Activated CD4-positive, alpha-beta T cell treated with anti-CD3 and anti-CD28 coated beads for 36 hours (primary cell): ENCODE measurements at regions of chr7 and their contacts with region 1.

Region 1: GRCh38 chr7:33932832-33933468 is 27.6 kb downstream of the BMPER start:
- DNase-seq: peak; percentile 78
- ATAC-seq: peak; percentile 51
- H3K4me3 Mint-ChIP-seq: no peak overlapping the region
- H3K27ac Mint-ChIP-seq: no peak overlapping the region
- H3K4me1 Mint-ChIP-seq: no peaks in the 10 kb centered on the region
- H3K27me3 Mint-ChIP-seq: peaks cover 8% of the 10 kb centered on the region

Region 2: DNA sequence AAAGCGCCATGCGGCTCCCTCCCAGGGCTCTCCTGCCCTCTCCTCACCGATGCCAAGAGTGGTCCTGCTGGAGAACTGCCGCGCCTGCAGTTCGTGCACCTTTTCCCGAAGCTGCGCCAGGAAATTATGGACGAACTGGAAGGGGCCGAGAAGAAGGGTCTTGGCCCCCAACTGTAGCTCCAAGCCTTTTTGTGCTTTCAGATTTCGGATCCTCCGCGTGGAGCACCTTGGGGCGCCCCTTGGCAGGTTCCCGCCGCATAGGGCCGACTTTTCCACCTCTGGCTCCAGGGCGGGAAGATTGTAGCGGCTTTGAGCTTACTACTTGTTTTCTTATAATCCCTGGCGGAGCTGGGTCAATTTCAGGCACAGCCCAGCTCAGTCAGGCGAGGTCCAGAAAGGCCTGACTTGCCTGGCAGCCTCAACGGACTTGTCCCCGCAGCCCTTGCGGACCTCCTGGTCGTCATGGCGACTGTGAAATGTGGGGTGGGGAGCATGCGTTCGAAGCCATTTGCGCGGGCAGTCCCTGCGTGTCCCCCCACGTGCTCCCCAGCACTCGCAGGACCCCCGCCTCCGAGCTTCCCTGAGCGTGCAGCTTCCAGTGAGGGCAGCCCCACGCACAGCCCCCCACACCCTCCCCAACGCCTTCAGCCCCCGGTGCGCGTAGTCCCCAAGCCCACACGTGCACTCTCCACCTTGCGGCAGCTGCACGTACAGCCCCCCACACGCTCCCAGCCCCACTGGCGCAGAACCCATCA is 1171.3 kb before region 1 on chr7:
- CTCF ChIA-PET with region 1: interaction called, 3 read pairs
- POLR2A ChIA-PET with region 1: no interaction called
- intact Hi-C with region 1: loop called in 1 of 2 experiments (anchors 2 kb)
- DNase-seq: peak; percentile 11
- ATAC-seq: no peak
- H3K4me3 Mint-ChIP-seq: no peak overlapping the region
- H3K27ac Mint-ChIP-seq: no peak overlapping the region
- H3K4me1 Mint-ChIP-seq: peaks cover 9% of the 10 kb centered on the region
- H3K27me3 Mint-ChIP-seq: peaks cover 43% of the 10 kb centered on the region

Region 3: GRCh38 chr7:33185786-33186185 is 747.2 kb before region 1 on chr7:
- CTCF ChIA-PET with region 1: interaction called, 5 read pairs
- POLR2A ChIA-PET with region 1: no interaction called
- intact Hi-C with region 1: loop called in 1 of 2 experiments (anchors 1 kb)
- DNase-seq: peak; percentile 9
- ATAC-seq: no peak
- H3K4me3 Mint-ChIP-seq: no peak overlapping the region
- H3K27ac Mint-ChIP-seq: no peak overlapping the region
- H3K4me1 Mint-ChIP-seq: peaks cover 5% of the 10 kb centered on the region
- H3K27me3 Mint-ChIP-seq: no peaks in the 10 kb centered on the region

Region 4: GRCh38 chr7:33243319-33243881 is 689.5 kb before region 1 on chr7:
- CTCF ChIA-PET with region 1: interaction called, 7 read pairs
- POLR2A ChIA-PET with region 1: no interaction called
- intact Hi-C with region 1: loop called (anchors 5 to 10 kb)
- DNase-seq: no peak
- ATAC-seq: no peak
- H3K4me3 Mint-ChIP-seq: no peak overlapping the region
- H3K27ac Mint-ChIP-seq: no peak overlapping the region
- H3K4me1 Mint-ChIP-seq: no peaks in the 10 kb centered on the region
- H3K27me3 Mint-ChIP-seq: no peaks in the 10 kb centered on the region

Region 5: DNA sequence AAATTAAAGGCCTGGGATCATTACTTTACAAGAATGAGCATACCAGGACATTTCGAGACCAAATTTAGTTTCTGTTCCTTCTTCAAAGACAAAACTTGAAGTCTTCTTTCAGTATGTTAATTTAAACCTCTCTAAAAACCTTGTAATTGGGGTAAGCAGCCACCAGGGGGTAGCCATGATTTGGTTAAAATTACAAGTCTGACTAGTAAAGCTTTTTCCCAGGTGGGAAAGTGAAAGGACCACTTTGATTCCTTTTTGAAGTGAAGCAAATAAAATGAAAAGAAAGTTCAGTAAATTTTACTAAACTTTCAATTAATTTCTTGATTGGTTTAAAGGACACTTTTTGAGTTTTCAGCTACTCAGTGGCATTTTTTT is 509.3 kb before region 1 on chr7:
- CTCF ChIA-PET with region 1: no interaction called
- POLR2A ChIA-PET with region 1: no interaction called
- intact Hi-C with region 1: loop called in 1 of 2 experiments (anchors 10 kb)
- DNase-seq: peak; percentile 29
- ATAC-seq: no peak
- H3K4me3 Mint-ChIP-seq: no peak overlapping the region
- H3K27ac Mint-ChIP-seq: no peak overlapping the region
- H3K4me1 Mint-ChIP-seq: no peaks in the 10 kb centered on the region
- H3K27me3 Mint-ChIP-seq: no peaks in the 10 kb centered on the region

Region 6: GRCh38 chr7:33757562-33758165 is 175.3 kb before region 1 on chr7:
- CTCF ChIA-PET with region 1: interaction called, 4 read pairs
- POLR2A ChIA-PET with region 1: no interaction called
- intact Hi-C with region 1: loop called in 1 of 2 experiments (anchors 1 kb)
- DNase-seq: peak; percentile 43
- ATAC-seq: no peak
- H3K4me3 Mint-ChIP-seq: no peak overlapping the region
- H3K27ac Mint-ChIP-seq: no peak overlapping the region
- H3K4me1 Mint-ChIP-seq: no peaks in the 10 kb centered on the region
- H3K27me3 Mint-ChIP-seq: no peaks in the 10 kb centered on the region

Region 7: GRCh38 chr7:33946094-33946700 is 13.2 kb after region 1 on chr7:
- CTCF ChIA-PET with region 1: interaction called, 10 read pairs
- POLR2A ChIA-PET with region 1: interaction called, 6 read pairs
- intact Hi-C with region 1: no loop called
- DNase-seq: no peak
- ATAC-seq: no peak
- H3K4me3 Mint-ChIP-seq: no peak overlapping the region
- H3K27ac Mint-ChIP-seq: no peak overlapping the region
- H3K4me1 Mint-ChIP-seq: no peaks in the 10 kb centered on the region
- H3K27me3 Mint-ChIP-seq: peaks cover 2% of the 10 kb centered on the region

Region 8: DNA sequence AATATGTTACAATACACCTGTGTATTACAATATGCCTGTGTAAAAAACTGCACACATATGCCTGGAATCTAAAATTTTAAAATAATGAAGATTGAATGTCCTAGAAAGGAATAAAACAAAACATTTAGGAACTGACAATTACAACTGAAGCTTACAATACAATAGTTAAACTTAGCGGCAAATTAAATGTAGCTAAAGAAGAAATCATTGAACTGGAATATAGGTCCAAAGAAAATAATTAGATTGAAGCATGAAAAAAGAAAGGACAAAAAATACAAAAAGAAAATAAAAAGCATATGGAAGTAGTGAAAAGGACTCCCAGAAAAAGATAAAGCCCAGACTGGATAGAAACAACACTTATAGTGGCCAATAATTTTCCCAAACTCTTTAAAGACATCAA is 763.5 kb after region 1 on chr7:
- CTCF ChIA-PET with region 1: no interaction called
- POLR2A ChIA-PET with region 1: no interaction called
- intact Hi-C with region 1: no loop called
- DNase-seq: no peak
- ATAC-seq: no peak
- H3K4me3 Mint-ChIP-seq: no peak overlapping the region
- H3K27ac Mint-ChIP-seq: no peak overlapping the region
- H3K4me1 Mint-ChIP-seq: no peaks in the 10 kb centered on the region
- H3K27me3 Mint-ChIP-seq: no peaks in the 10 kb centered on the region